AG04450 (cell line): ENCODE measurements at regions of chr12 and their contacts with region 1.

Region 1: DNA sequence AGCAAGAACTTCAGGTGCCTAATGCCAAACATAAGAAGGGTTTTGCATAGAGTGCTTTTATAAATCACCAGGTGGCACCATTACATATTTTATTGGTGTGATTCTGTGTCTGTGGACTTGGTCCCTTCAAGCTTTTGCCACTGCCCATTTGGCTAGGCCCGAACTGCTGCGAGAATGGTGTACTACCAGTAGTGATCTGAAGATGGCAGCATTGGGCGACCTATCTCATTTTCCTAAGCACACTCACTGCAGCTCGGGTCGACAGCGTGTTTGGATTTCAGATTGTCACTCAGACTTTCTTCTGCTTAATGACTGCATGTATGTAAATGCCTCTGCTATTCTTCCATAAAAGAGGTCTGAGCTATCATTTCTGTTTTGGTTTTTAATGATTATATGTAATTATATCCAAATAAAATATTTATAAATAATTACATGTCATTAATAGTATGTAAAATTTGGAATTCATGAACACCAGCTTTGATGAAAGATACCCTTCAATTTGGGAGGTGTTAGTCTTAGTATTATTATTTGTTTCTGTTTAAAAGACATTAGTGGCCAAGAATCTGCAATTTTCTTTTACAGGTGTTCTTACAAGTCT is 78.5 kb downstream of the TPH2 start:
- DNase-seq: peak; percentile 47
- H3K4me3 ChIP-seq: no peak overlapping the region
- H3K27ac ChIP-seq: no peak overlapping the region
- H3K27me3 ChIP-seq: peaks cover 10% of the 10 kb centered on the region
- CTCF ChIP-seq: peak; percentile 83

Region 2: DNA sequence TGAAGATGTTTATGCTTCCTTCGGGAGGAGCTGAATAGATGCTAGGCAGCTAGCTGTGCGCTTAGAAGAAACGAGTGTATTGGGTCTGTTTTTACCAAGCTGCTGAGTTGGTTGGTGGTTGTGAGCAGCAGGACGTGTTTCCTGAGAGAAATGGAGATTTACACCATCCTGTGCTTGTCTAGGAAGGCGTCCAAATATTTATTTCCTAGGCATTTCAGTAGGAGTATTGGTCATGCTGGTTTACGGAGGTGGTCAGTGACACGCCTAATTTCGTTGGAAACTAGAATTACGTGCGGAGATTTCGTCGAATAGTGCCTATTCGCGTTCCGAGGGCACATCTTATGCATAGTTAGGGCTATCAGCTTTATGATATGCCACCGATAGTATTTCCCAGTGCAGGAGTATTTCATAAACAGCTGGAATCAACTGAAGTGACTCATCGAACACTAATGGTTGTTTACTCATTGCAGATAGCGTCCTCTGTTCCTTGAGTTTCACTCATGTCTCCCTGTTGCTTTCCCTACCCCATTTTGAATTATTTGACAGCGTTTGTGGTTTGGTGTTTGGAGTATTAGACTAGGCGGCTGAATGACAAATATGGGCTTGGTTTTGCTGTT is 176.8 kb before region 1 on chr12:
- CTCF ChIA-PET with region 1: no interaction called
- POLR2A ChIA-PET with region 1: no interaction called
- DNase-seq: peak; percentile 44
- H3K4me3 ChIP-seq: peak overlapping the region; percentile 90
- H3K27ac ChIP-seq: peak overlapping the region; percentile 95
- H3K27me3 ChIP-seq: no peaks in the 10 kb centered on the region
- CTCF ChIP-seq: no peak

Region 3: DNA sequence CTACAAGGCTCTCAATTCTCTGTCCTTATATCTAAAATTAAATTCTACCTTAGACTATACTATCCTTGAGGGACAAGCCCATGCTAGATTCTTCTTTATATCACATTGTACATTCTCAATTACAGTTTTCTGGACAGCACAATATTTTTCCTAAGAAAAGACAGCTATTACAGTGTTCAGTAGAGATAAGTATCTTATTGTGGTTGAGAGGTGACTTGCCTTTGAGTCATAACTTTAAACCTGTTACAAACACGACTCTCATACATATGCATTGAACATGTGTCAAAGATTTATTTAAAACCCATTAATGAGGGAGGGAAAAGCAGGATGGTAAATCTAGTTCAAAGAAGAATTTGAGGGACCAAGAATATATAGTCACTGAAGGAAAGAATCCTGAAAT is 17.4 kb before region 1 on chr12:
- CTCF ChIA-PET with region 1: interaction called, 15 read pairs
- POLR2A ChIA-PET with region 1: no interaction called
- DNase-seq: no peak
- H3K4me3 ChIP-seq: no peak overlapping the region
- H3K27ac ChIP-seq: no peak overlapping the region
- H3K27me3 ChIP-seq: peaks cover 5% of the 10 kb centered on the region
- CTCF ChIP-seq: no peak

Region 4: GRCh38 chr12:72264548-72265175 is 247.5 kb after region 1 on chr12:
- CTCF ChIA-PET with region 1: interaction called, 11 read pairs
- POLR2A ChIA-PET with region 1: no interaction called
- DNase-seq: no peak
- H3K4me3 ChIP-seq: no peak overlapping the region
- H3K27ac ChIP-seq: no peak overlapping the region
- H3K27me3 ChIP-seq: no peaks in the 10 kb centered on the region
- CTCF ChIP-seq: peak; percentile 59

Region 5: DNA sequence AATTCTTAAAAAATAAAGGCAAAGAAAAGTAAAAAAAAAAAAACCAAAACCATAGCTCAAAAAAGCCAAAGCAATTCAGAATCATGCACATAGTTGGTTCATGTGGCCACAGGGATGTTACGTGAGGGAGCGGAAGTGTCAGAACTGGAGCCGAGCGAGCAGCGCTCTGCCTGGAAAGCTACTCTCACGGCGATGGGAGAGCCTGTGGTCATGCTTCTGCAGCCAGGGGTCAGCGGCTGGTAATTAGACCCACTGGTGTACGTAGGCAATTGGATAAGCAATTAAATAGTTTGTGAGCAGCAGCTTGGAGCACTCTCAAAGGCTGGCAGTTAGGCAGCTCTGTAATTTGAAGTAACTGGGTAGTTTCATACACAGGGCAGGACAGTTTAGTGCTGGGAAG is 313.1 kb after region 1 on chr12:
- CTCF ChIA-PET with region 1: interaction called, 13 read pairs
- POLR2A ChIA-PET with region 1: no interaction called
- DNase-seq: no peak
- H3K4me3 ChIP-seq: no peak overlapping the region
- H3K27ac ChIP-seq: no peak overlapping the region
- H3K27me3 ChIP-seq: no peaks in the 10 kb centered on the region
- CTCF ChIP-seq: no peak